Ascending aorta (tissue), 2 donors: ENCODE measurements at regions of chr6 and their contacts with region 1.

Region 1: DNA sequence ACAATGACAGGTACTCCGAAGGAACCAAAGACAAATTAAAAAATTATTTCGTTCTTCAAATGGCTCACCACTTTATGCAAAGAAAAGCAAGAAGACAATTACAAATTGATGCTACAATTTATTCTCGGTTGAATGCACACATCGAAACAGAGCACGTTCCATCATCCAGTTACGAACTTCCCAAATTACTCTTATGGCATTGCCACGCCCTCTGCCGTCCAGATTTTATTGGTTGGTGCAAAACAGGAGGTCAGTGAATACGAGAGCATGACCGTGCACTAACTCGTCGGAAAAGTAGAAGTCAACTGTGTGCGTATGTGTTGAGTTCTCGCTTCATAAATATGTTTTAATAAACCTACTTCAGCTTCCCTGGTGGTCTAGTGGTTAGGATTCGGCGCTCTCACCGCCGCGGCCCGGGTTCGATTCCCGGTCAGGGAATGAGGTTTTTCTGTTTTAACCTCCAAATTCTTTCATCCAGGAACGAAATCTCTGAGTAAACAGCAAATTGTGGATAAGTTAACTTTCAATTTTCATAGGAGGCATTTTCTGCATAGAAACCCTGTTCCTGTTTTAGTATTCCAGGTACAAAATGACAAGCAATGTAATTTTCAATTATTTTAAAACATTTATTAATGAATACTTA is 23.2 kb downstream of the ZNF311 start:
- DNase-seq: peak; percentile 79 to 96
- H3K4me3 ChIP-seq: peak overlapping the region; percentile 63 to 64
- H3K27ac ChIP-seq: peak overlapping the region; percentile 74 to 79
- H3K4me1 ChIP-seq: no peaks in the 10 kb centered on the region
- H3K27me3 ChIP-seq: no peaks in the 10 kb centered on the region
- CTCF ChIP-seq: peak in 1 of 3 experiments; percentile 18

Region 2: DNA sequence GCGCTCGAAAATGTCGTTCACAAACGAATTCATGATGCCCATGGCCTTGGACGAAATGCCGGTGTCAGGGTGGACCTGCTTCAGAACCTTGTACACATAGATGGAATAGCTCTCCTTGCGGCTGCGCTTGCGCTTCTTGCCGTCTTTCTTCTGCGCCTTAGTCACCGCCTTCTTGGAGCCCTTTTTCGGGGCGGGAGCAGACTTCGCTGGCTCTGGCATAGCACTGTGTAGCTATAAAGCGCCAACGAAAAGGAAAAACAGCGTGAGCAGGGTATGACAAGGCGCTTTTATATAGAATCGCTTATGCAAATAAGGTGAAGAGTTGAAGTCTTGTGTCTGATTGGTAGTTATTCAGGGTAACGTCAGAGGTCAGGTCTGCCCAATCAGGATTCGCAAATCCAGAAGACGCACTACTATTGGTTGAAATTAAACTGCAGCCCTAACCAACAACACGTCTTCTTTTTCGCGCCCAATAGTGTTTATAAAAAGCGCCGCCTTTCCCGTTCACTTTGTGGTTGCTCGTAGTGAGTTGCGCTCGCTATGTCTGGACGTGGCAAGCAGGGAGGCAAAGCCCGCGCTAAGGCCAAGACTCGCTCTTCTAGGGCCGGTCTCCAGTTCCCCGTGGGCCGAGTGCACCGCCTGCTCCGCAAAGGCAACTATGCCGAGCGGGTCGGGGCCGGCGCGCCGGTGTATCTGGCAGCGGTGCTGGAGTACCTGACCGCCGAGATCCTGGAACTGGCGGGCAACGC is 1849.2 kb before region 1 on chr6:
- intact Hi-C with region 1: loop called (anchors 10 kb)
- DNase-seq: peak; percentile 82 to 97
- H3K4me3 ChIP-seq: peak overlapping the region; percentile 69 to 75
- H3K27ac ChIP-seq: peak overlapping the region; percentile 88 to 89
- H3K4me1 ChIP-seq: peaks cover 4 to 10% of the 10 kb centered on the region in 2 donors
- H3K27me3 ChIP-seq: no peaks in the 10 kb centered on the region
- CTCF ChIP-seq: no peak

Region 3: DNA sequence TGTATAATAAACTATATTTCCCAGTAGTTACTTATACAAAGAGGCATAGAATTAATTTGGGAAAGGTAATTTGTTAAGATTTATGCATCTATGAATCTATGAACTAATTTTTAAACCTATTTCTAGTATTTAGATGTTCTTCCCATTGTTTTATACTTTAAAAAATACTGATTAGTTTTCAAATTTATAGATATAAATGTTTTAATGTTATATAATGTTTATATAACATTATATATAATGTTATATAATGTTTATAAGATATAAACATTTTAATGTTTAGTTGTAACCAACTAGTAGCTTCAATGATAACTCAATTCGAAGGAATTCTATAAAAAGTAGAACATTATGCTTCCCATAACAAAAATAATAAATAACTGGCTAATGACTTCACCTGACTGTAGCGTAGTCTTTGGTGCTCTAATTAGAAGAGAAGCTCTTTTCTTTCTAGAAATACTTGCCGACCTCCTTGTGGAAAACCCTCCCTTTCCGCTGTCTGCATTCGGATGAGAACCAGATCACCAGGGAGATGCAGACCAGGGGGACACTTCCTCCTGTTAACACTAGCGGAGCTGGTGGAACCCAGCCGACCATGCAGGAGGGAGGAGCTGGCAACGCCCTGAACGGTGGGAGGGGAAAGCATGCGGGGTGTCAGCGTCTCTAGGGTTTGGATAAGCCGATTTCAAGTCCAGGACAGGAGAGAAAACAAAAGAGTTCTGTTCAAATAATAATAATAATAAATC is 1228.1 kb before region 1 on chr6:
- intact Hi-C with region 1: loop called (anchors 5 kb)
- DNase-seq: peak in 1 of 2 donors; percentile 81
- H3K4me3 ChIP-seq: peak overlapping the region; percentile 32 to 93
- H3K27ac ChIP-seq: no peak overlapping the region
- H3K4me1 ChIP-seq: peaks cover 0 to 3% of the 10 kb centered on the region in 2 donors
- H3K27me3 ChIP-seq: peaks cover 5% of the 10 kb centered on the region
- CTCF ChIP-seq: no peak

Region 4: DNA sequence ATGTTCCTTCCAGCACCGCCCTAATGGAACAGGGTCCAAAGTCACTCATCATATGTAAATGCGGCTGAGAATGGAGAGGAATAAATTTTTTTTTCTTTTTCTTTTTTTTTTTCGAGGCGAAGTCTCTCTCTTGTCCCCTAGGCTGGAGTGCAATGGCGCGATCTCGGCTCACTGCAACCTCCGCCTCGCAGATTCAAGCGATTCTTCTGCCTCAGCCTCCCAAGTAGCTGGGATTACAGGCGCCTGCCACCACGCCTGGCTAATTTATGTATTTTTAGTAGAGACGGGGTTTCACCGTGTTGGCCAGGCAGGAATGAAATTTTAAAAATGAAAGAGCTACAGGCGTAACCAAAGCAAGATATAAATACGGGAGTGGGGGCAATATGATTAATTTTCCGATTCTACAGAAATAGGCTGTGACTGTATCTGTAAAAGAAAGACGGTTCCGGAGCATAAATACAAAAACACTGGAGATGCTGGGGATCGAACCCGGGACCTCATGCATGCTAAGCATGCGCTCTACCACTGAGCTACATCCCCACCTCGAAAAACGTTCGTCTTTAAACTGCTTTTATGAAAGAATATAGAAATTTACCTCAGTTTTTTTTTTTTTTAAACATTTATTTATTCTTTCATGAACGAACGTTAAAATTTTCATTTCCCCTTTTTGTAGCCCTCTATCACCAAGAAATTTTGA is 324.0 kb before region 1 on chr6:
- intact Hi-C with region 1: loop called (anchors 2 kb)
- DNase-seq: no peak
- H3K4me3 ChIP-seq: peak overlapping the region; percentile 48 to 60
- H3K27ac ChIP-seq: no peak overlapping the region
- H3K4me1 ChIP-seq: no peaks in the 10 kb centered on the region
- H3K27me3 ChIP-seq: no peaks in the 10 kb centered on the region
- CTCF ChIP-seq: no peak

Region 5: GRCh38 chr6:28863604-28864320 is 118.2 kb before region 1 on chr6:
- intact Hi-C with region 1: loop called (anchors 1 kb)
- DNase-seq: peak in 1 of 2 donors; percentile 86
- H3K4me3 ChIP-seq: peak overlapping the region; percentile 66 to 81
- H3K27ac ChIP-seq: peak overlapping the region; percentile 59 to 78
- H3K4me1 ChIP-seq: peaks cover 0 to 3% of the 10 kb centered on the region in 2 donors
- H3K27me3 ChIP-seq: no peaks in the 10 kb centered on the region
- CTCF ChIP-seq: no peak

Region 6: DNA sequence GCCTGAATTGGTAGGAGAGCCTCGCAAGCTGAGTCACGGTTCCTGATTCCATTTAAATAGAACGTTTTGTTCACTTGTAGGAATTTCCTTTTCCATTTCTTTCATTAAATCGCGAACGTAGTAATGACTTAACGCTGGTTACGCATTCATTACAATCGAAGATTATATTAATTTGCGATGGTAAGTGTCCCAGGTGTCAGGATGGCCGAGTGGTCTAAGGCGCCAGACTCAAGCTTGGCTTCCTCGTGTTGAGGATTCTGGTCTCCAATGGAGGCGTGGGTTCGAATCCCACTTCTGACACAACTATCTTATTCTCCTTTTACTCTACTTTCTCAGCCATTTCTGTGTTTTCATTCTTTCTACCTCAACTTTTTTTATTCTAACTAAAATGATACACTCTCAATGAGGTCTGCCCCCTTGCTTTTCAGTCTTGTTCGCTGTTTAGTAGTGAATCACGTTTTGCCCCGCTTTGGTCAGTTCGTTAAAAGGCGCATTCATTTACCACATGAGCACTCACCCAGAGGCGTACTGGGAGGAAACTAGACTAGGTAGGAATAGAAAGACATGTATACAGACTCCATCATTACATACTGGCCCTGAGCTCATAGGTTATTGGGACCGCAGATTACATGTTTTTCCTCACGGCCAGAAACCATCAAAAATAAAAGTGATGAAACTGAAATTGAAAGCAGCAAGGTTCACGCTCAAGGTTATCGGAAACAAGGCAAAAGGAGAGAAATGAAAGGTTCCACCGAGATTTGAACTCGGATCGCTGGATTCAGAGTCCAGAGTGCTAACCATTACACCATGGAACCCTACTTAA is 40.9 kb before region 1 on chr6:
- intact Hi-C with region 1: loop called (anchors 1 kb)
- DNase-seq: peak; percentile 31 to 89
- H3K4me3 ChIP-seq: peak overlapping the region; percentile 77 to 81
- H3K27ac ChIP-seq: peak overlapping the region; percentile 89 to 91
- H3K4me1 ChIP-seq: no peaks in the 10 kb centered on the region
- H3K27me3 ChIP-seq: no peaks in the 10 kb centered on the region
- CTCF ChIP-seq: no peak

Region 7: GRCh38 chr6:29016559-29017427 is 34.8 kb after region 1 on chr6:
- intact Hi-C with region 1: loop called (anchors 1 kb)
- DNase-seq: peak in 1 of 2 donors; percentile 92
- H3K4me3 ChIP-seq: peak overlapping the region; percentile 47 to 71
- H3K27ac ChIP-seq: peak overlapping the region in 1 of 2 donors; percentile 67
- H3K4me1 ChIP-seq: peaks cover 0 to 2% of the 10 kb centered on the region in 2 donors
- H3K27me3 ChIP-seq: peaks cover 5% of the 10 kb centered on the region
- CTCF ChIP-seq: peak; percentile 53 to 65 (median 61)

Region 8: DNA sequence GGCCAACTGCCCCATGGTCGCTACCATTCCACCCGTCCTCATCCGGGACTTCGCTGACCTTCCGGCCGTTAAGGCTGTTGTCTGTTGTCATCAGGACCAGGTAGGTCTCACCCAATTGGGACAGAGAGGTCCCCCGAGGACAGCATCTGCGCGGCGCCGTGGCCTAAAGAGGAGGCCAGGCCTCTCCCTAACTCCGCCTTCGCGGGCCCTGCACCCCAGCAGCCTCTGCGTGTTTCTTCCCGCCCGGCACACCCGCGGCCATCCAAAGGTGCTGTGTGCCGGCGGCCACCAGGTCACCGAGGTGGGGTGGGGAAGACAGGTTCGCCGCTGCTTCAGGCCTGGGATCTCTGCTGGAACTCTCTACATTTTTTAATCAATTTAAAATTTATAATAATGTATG is 54.0 kb after region 1 on chr6:
- intact Hi-C with region 1: no loop called
- DNase-seq: no peak
- H3K4me3 ChIP-seq: no peak overlapping the region
- H3K27ac ChIP-seq: no peak overlapping the region
- H3K4me1 ChIP-seq: no peaks in the 10 kb centered on the region
- H3K27me3 ChIP-seq: no peaks in the 10 kb centered on the region
- CTCF ChIP-seq: no peak